ENCODE measurements at regions of chr5 and their contacts with region 1.

Region 1: GRCh38 chr5:160500786-160501779 is 79.4 kb downstream of the PTTG1 start:
- DNase-seq: no peak
- ATAC-seq: peak; percentile 28
- H3K4me3 ChIP-seq: no peak overlapping the region
- H3K27ac ChIP-seq: no peak overlapping the region
- H3K4me1 ChIP-seq: peaks cover 22% of the 10 kb centered on the region
- H3K27me3 ChIP-seq: no peaks in the 10 kb centered on the region
- CTCF ChIP-seq: no peak
- EP300 ChIP-seq: no peak
- POLR2A ChIP-seq: no peak
- RAD21 ChIP-seq: no peak

Region 2: GRCh38 chr5:160390787-160391696 is 110.0 kb before region 1 on chr5:
- CTCF ChIA-PET with region 1: no interaction called
- POLR2A ChIA-PET with region 1: no interaction called
- RAD21 ChIA-PET with region 1: no interaction called
- SMC1A ChIA-PET with region 1: no interaction called
- in situ Hi-C with region 1: no loop called
- intact Hi-C with region 1: no loop called
- DNase-seq: no peak
- ATAC-seq: peak; percentile 69
- H3K4me3 ChIP-seq: no peak overlapping the region
- H3K27ac ChIP-seq: no peak overlapping the region
- H3K4me1 ChIP-seq: no peaks in the 10 kb centered on the region
- H3K27me3 ChIP-seq: no peaks in the 10 kb centered on the region
- CTCF ChIP-seq: peak; percentile 22 to 62 (median 30); a peak in 4 of 6 replicates
- EP300 ChIP-seq: no peak
- POLR2A ChIP-seq: no peak
- RAD21 ChIP-seq: peak; percentile 37; the same call in 1 of the 2 replicates

Region 3: DNA sequence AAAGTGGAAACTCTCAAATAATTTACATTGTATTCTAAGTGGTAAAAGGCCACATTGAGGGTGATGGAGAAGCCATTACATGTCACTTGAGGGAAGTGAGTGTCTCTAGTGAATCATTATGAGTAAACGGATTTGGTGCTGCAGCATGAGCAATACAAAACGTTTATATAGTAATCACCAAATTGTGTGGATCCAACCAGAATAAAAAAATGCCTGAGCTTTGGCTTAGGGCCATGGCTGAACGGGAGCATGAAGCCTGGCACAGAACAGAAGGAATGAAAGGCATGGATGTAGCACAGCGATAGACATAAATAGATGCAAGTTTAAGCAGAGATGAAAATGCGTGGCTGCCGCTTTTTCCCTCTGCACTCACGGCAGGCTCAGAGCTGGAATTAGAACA is 21.2 kb before region 1 on chr5:
- CTCF ChIA-PET with region 1: interaction called, 29 read pairs
- POLR2A ChIA-PET with region 1: interaction called, 10 read pairs
- RAD21 ChIA-PET with region 1: interaction called, 16 read pairs
- SMC1A ChIA-PET with region 1: interaction called, 20 read pairs
- in situ Hi-C with region 1: no loop called
- intact Hi-C with region 1: no loop called
- DNase-seq: no peak
- ATAC-seq: peak; percentile 8; the same call in 2 of the 3 replicates
- H3K4me3 ChIP-seq: no peak overlapping the region
- H3K27ac ChIP-seq: no peak overlapping the region
- H3K4me1 ChIP-seq: peaks cover 13% of the 10 kb centered on the region; the same call in 1 of the 2 replicates
- H3K27me3 ChIP-seq: no peaks in the 10 kb centered on the region
- CTCF ChIP-seq: no peak
- EP300 ChIP-seq: no peak
- POLR2A ChIP-seq: no peak
- RAD21 ChIP-seq: no peak

Region 4: GRCh38 chr5:160486573-160486972 is 14.5 kb before region 1 on chr5:
- CTCF ChIA-PET with region 1: interaction called, 29 read pairs
- POLR2A ChIA-PET with region 1: interaction called, 10 read pairs
- RAD21 ChIA-PET with region 1: no interaction called
- SMC1A ChIA-PET with region 1: interaction called, 9 read pairs
- in situ Hi-C with region 1: no loop called
- intact Hi-C with region 1: no loop called
- DNase-seq: no peak
- ATAC-seq: peak; percentile 82
- H3K4me3 ChIP-seq: no peak overlapping the region
- H3K27ac ChIP-seq: peak overlapping the region; percentile 53
- H3K4me1 ChIP-seq: peaks cover 21% of the 10 kb centered on the region
- H3K27me3 ChIP-seq: no peaks in the 10 kb centered on the region
- CTCF ChIP-seq: no peak
- EP300 ChIP-seq: peak; percentile 29 to 52; a peak in 2 of 4 replicates
- POLR2A ChIP-seq: no peak
- RAD21 ChIP-seq: no peak

Region 5: DNA sequence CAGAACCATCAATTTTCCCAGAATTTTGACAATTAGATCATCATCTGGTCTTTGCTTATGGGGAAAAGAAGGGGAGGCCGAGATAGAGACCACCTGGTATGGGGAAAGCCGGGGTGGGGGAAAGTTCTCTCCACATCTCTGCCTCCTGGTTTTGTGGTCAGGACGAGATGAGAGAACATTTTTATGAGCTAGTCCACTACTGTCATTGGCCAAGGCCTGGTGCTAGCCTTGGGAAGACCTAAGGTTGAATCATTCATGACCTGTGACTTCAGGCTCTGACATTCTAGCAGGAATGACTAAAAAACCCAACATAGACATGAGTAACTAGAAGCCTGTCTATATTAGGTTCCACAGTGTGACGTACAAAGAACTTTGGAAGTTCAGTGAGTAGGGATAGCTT is 55.8 kb after region 1 on chr5:
- CTCF ChIA-PET with region 1: no interaction called
- POLR2A ChIA-PET with region 1: no interaction called
- RAD21 ChIA-PET with region 1: no interaction called
- SMC1A ChIA-PET with region 1: no interaction called
- in situ Hi-C with region 1: no loop called
- intact Hi-C with region 1: no loop called
- DNase-seq: no peak
- ATAC-seq: no peak
- H3K4me3 ChIP-seq: no peak overlapping the region
- H3K27ac ChIP-seq: no peak overlapping the region
- H3K4me1 ChIP-seq: no peaks in the 10 kb centered on the region
- H3K27me3 ChIP-seq: no peaks in the 10 kb centered on the region
- CTCF ChIP-seq: no peak
- EP300 ChIP-seq: no peak
- POLR2A ChIP-seq: no peak
- RAD21 ChIP-seq: no peak

Measured in GM12878 (cell line).